ENCODE measurements at regions of chr15 and their contacts with region 1.

Region 1: GRCh38 chr15:55318588-55319494 is at the starts of genes PIGB and PIGBOS1:
- DNase-seq: peak; percentile 75
- ATAC-seq: peak; percentile 86
- H3K4me3 Mint-ChIP-seq: peak within 1 kb of the TSS; percentile 99
- H3K27ac Mint-ChIP-seq: peak within 1 kb of the TSS; percentile 99
- H3K4me1 Mint-ChIP-seq: peaks cover 68% of the 10 kb centered on the region
- H3K27me3 Mint-ChIP-seq: no peaks in the 10 kb centered on the region
- CTCF ChIP-seq: no peak
- total RNA-seq, gene PIGB: 29.8 and 31.2 TPM in 2 replicates
- total RNA-seq, gene PIGBOS1: 10.7 and 12.6 TPM in 2 replicates

Region 2: DNA sequence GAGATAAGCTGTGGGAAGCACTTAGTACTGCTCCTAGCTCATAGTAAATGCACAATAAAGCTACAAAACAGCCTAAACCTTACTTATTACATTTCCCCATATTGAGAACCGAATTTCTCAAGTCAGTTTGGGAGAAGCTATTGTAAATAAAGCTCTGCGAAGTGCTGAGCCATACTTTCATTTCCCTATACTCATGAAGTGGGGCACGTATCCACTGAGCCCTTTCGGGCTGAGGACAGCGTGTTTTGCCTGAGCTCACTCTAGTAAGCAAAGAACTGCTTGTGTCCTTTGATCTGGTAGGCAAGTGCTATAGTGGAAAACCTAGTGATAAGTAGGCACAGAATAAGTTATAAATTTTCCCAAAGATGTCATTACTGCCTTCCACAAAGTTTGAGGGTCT is 287.1 kb before region 1 on chr15:
- CTCF ChIA-PET with region 1: no interaction called
- POLR2A ChIA-PET with region 1: no interaction called
- intact Hi-C with region 1: no loop called
- DNase-seq: no peak
- ATAC-seq: no peak
- H3K4me3 Mint-ChIP-seq: no peak overlapping the region
- H3K27ac Mint-ChIP-seq: no peak overlapping the region
- H3K4me1 Mint-ChIP-seq: no peaks in the 10 kb centered on the region
- H3K27me3 Mint-ChIP-seq: peaks cover 2% of the 10 kb centered on the region
- CTCF ChIP-seq: no peak

Region 3: DNA sequence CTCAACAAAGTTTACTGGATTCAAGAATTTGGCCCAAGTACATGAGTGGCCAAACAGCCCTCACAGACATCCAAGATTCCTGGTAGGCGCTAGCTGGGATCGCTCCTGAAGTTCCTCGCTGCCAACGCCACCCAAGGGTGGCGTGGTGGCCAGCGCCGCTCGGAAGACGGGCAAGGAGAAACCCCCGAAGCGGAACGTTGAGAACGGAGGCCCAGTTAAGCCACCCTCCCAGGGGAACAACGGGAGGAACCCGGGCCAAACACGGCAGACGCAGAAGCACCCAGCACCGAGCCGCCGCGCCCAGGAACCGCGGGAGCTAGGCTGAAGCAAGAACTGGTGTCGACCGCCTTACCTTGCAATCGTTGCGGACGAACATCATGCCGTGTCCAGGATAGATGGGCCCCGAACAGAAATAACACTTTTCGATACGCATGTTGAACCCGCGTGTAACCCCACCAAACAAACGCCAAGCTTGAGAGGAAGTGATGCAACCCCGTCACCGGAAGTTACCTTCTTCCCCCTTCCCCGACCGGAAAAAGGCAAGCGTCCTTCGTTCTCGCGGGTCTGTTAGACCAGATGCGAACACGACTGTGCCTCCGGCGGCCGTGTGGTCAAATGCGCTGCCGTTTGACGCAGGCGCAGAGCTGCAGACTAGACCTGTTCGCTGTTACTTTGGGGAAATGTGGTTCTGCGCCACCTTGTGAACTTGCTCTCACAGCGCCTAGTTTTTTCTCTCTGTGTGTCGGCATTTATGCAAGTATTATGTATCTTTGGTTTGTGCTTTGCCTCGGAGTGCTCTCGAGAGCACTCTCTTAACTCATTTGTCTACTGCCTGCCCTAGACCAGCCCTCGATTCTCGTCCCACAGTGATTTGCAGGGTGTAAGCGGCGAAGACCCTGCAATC is 122.1 kb before region 1 on chr15 and contains the start of gene RSL24D1:
- CTCF ChIA-PET with region 1: interaction called, 3 read pairs
- POLR2A ChIA-PET with region 1: interaction called, 33 read pairs
- intact Hi-C with region 1: loop called (anchors 1 kb)
- DNase-seq: peak; percentile 84
- ATAC-seq: peak; percentile 95
- H3K4me3 Mint-ChIP-seq: no peak within 1 kb of the TSS
- H3K27ac Mint-ChIP-seq: no peak within 1 kb of the TSS
- H3K4me1 Mint-ChIP-seq: peaks cover 9% of the 10 kb centered on the region
- H3K27me3 Mint-ChIP-seq: no peaks in the 10 kb centered on the region
- CTCF ChIP-seq: no peak
- total RNA-seq, gene RSL24D1: 90.0 and 99.5 TPM in 2 replicates

Region 4: DNA sequence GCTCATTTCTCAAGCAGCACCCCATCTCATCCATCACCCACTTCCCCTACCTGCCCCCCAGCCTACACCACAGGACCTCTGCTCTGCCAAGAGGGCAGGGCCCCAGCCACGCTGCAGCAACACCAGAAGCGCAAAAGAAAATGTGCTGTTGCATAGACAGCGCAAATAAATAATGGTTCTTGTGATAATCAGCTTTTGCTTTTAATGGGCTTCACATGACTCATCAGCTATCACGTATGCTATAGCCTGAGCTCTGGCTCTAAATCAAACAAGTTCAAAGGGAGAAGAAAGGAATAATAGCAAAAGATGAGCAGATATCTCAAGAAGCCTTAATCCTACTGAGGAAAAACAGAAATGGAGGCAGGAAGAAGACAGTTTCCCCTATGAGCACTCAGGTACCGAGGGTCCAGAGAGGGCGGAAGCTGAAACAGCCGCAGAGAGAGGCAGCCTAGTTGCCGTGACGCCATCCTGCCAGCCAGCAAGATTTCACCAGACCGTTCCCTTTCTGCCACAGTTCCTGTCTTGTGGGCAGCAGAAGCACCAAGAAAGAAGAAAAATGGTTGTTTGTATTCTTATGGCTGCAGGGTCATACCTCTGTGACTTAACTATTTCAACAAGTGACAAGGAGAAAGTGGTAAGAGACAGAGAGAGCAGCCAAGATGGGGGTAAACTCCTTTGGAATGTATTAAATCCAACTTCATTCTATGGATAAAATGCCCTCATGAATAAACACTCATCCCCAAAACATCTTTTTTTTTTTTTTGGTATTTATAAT is 51.3 kb before region 1 on chr15:
- CTCF ChIA-PET with region 1: no interaction called
- POLR2A ChIA-PET with region 1: interaction called, 8 read pairs
- intact Hi-C with region 1: loop called (anchors 1 kb)
- DNase-seq: peak; percentile 39
- ATAC-seq: peak; percentile 98
- H3K4me3 Mint-ChIP-seq: peak overlapping the region; percentile 82
- H3K27ac Mint-ChIP-seq: peak overlapping the region; percentile 96
- H3K4me1 Mint-ChIP-seq: peaks cover 26% of the 10 kb centered on the region
- H3K27me3 Mint-ChIP-seq: no peaks in the 10 kb centered on the region
- CTCF ChIP-seq: no peak

Region 5: DNA sequence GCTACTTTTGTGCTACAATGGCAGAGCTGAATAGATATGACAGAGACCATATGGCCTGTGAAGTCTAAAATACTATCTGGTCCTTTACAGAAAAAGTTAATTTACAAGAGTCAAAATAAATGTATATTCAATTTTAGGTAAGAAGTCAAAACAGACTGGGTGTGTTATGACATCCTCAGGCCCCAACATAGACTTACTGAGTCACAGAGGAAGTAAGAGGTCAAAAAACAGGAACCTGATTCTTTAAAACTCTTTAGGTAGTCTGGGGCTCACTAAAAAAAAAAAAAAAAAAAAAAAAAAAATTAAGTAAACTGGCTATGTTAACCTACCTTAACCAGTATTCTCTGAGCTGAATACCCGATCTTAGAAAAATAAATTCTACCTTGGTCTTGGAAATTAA is 176.1 kb after region 1 on chr15:
- CTCF ChIA-PET with region 1: no interaction called
- POLR2A ChIA-PET with region 1: no interaction called
- intact Hi-C with region 1: loop called (anchors 5 kb)
- DNase-seq: no peak
- ATAC-seq: peak; percentile 41
- H3K4me3 Mint-ChIP-seq: no peak overlapping the region
- H3K27ac Mint-ChIP-seq: no peak overlapping the region
- H3K4me1 Mint-ChIP-seq: peaks cover 18% of the 10 kb centered on the region
- H3K27me3 Mint-ChIP-seq: no peaks in the 10 kb centered on the region
- CTCF ChIP-seq: no peak